Breast epithelium (tissue), 4 donors: ENCODE measurements at regions of chr19 and their contacts with region 1.

Region 1: GRCh38 chr19:55173714-55174409 is 6.2 kb downstream of the SYT5 start:
- DNase-seq: no peak
- H3K4me3 ChIP-seq: peak overlapping the region; percentile 5 to 69 (median 43)
- H3K27ac ChIP-seq: no peak overlapping the region
- H3K4me1 ChIP-seq: peaks cover 0 to 3% of the 10 kb centered on the region in 2 donors
- H3K27me3 ChIP-seq: peaks cover 8 to 96% of the 10 kb centered on the region in 2 donors
- CTCF ChIP-seq: no peak
- POLR2A ChIP-seq: no peak

Region 2: DNA sequence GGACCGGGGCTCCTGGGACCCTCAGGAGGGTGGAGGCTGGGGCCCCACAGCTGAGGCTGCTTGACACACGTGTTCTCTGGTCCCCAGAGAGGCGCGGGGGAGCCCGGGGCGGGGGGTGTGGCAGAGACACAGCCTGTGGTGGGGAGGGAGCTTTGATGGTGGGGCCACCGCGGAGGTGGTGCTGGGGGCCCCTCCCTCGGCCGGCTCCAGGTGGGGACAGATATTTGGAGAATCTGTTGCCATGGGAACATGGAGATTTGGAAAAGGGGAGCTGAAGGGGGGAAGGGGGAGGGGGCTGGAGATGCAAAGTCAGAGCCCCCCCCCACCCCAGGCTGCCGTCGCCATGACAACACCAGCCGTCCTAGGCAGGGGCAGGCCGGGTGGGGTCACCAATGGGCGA is 1290.7 kb before region 1 on chr19:
- intact Hi-C with region 1: no loop called
- DNase-seq: no peak
- H3K4me3 ChIP-seq: no peak overlapping the region
- H3K27ac ChIP-seq: no peak overlapping the region
- H3K4me1 ChIP-seq: peaks cover 0 to 9% of the 10 kb centered on the region in 2 donors
- H3K27me3 ChIP-seq: peaks cover 0 to 42% of the 10 kb centered on the region in 2 donors
- CTCF ChIP-seq: no peak
- POLR2A ChIP-seq: no peak

Region 3: DNA sequence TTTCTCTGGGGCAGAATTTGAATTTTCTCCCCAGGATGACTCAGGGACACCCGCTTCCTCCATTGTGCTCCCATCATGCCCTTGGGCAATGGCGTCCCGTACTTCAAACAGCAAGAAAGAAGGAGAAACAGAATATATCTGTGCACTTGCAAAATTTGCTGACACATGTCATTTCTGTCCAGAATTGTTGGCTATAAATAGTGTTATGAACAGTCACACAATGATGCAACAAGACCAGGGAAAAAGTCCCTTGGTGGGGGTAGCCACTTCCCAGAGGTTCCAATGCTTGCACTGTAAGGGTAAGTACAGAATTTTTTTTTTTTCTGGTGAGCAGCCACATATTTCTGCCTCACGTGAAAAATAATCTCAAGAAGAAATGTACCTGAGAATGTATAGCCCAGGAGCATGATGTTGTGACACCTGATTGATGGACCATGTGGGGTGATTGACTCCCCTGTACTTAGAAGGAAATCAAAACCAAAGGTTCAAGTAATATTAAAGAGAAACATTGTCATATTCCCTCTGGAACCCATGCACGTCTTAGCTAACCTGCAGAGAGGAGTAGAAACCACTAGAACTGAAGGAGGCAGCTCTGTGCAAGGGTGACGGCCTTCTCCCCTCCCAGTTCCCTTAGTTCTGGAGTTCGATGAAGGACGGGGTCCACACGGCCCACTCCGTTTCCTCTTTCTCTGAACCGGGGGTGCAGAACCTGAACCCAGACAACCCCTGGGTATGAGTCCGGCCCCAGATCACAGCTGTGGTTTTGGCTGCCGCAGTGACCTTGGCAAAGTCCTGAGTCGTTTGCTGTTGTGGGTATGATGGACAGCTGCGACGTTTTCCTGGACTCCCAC is 799.9 kb before region 1 on chr19:
- intact Hi-C with region 1: loop called (anchors 5 kb)
- DNase-seq: no peak
- H3K4me3 ChIP-seq: no peak overlapping the region
- H3K27ac ChIP-seq: no peak overlapping the region
- H3K4me1 ChIP-seq: no peaks in the 10 kb centered on the region
- H3K27me3 ChIP-seq: no peaks in the 10 kb centered on the region
- CTCF ChIP-seq: no peak
- POLR2A ChIP-seq: no peak

Region 4: DNA sequence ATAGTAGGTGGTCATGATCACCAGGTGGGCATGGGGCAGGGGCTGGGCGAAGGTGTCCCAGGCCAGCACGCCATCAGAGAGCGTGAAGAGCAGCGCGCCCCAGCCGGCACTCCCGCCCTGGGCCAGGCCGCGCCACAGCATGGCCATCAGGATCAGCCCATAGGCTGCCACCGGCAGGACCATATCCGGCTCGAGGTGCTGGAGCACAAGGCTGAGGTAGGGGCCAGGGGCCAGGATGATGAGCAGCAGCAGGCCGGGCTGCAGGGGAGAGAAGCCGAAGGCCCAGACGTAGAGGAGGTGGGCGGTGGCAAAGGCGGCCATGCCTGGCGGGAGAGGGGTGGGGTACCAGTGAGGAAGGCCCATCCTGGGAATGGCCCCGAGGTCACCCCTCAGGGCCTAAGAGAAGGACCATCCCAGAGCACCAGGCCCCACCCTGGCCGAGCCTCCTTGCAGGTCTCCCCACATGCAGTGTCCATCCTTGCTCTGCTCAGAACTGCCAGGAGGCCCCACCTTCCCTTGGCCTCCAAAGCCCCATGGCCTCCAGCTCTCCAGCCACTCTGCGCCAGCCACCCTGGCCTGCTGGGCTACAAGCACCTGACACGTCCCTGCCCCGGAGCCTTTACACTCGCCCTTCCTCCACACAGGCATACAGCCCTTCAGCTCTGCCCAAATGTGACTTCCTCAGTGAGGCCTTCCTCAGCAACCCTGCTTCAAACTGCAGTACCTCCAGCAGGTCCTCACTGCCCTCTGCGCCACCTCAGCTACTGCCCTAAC is 53.6 kb after region 1 on chr19:
- intact Hi-C with region 1: no loop called
- DNase-seq: no peak
- H3K4me3 ChIP-seq: no peak overlapping the region
- H3K27ac ChIP-seq: no peak overlapping the region
- H3K4me1 ChIP-seq: no peaks in the 10 kb centered on the region
- H3K27me3 ChIP-seq: no peaks in the 10 kb centered on the region
- CTCF ChIP-seq: no peak
- POLR2A ChIP-seq: no peak